ENCODE measurements at regions of chr12 and their contacts with region 1.

Region 1: GRCh38 chr12:52980693-52981423 is 25.4 kb upstream of the EIF4B start:
- DNase-seq: peak; percentile 53 to 85 (median 79)
- ATAC-seq: peak; percentile 98
- H3K4me3 ChIP-seq: no peak overlapping the region
- H3K4me3 Mint-ChIP-seq: no peak overlapping the region
- H3K27ac ChIP-seq: no peak overlapping the region
- H3K27ac Mint-ChIP-seq: peak overlapping the region in 1 of 9 donors; percentile 17
- H3K4me1 ChIP-seq: no peaks in the 10 kb centered on the region
- H3K4me1 Mint-ChIP-seq: peaks cover 0 to 7% (median 0%) of the 10 kb centered on the region in 7 donors
- H3K27me3 ChIP-seq: no peaks in the 10 kb centered on the region
- H3K27me3 Mint-ChIP-seq: peaks cover 23 to 44% (median 26%) of the 10 kb centered on the region in 5 donors

Region 2: GRCh38 chr12:52327052-52327829 is 653.6 kb before region 1 on chr12:
- CTCF ChIA-PET with region 1: no interaction called
- POLR2A ChIA-PET with region 1: no interaction called
- intact Hi-C with region 1: loop called in 1 of 2 experiments (anchors 1 kb)
- DNase-seq: peak; percentile 42 to 81 (median 72)
- ATAC-seq: peak; percentile 97
- H3K4me3 ChIP-seq: no peak overlapping the region
- H3K4me3 Mint-ChIP-seq: no peak overlapping the region
- H3K27ac ChIP-seq: no peak overlapping the region
- H3K27ac Mint-ChIP-seq: peak overlapping the region in 1 of 9 donors; percentile 1
- H3K4me1 ChIP-seq: peaks cover 0 to 6% of the 10 kb centered on the region in 2 donors
- H3K4me1 Mint-ChIP-seq: peaks cover 0 to 13% (median 6%) of the 10 kb centered on the region in 7 donors
- H3K27me3 ChIP-seq: no peaks in the 10 kb centered on the region
- H3K27me3 Mint-ChIP-seq: peaks cover 1 to 32% (median 19%) of the 10 kb centered on the region in 5 donors

Region 3: GRCh38 chr12:52847335-52848102 is 133.3 kb before region 1 on chr12:
- CTCF ChIA-PET with region 1: no interaction called
- POLR2A ChIA-PET with region 1: no interaction called
- intact Hi-C with region 1: no loop called
- DNase-seq: no peak
- ATAC-seq: no peak
- H3K4me3 ChIP-seq: no peak overlapping the region
- H3K4me3 Mint-ChIP-seq: no peak overlapping the region
- H3K27ac ChIP-seq: no peak overlapping the region
- H3K27ac Mint-ChIP-seq: no peak overlapping the region
- H3K4me1 ChIP-seq: no peaks in the 10 kb centered on the region
- H3K4me1 Mint-ChIP-seq: peaks cover 0 to 2% (median 1%) of the 10 kb centered on the region in 7 donors
- H3K27me3 ChIP-seq: no peaks in the 10 kb centered on the region
- H3K27me3 Mint-ChIP-seq: peaks cover 0 to 10% (median 0%) of the 10 kb centered on the region in 5 donors

Region 4: GRCh38 chr12:52879394-52880351 is 101.2 kb before region 1 on chr12:
- CTCF ChIA-PET with region 1: interaction called, 297 read pairs
- POLR2A ChIA-PET with region 1: interaction called, 18 read pairs
- intact Hi-C with region 1: loop called in 1 of 2 experiments (anchors 1 kb)
- DNase-seq: peak; percentile 67 to 84 (median 79)
- ATAC-seq: peak; percentile 99
- H3K4me3 ChIP-seq: peak overlapping the region; percentile 48
- H3K4me3 Mint-ChIP-seq: peak overlapping the region; percentile 51 to 85 (median 76)
- H3K27ac ChIP-seq: no peak overlapping the region
- H3K27ac Mint-ChIP-seq: peak overlapping the region in 6 of 9 donors; percentile 5 to 54 (median 32)
- H3K4me1 ChIP-seq: peaks cover 5 to 6% of the 10 kb centered on the region in 2 donors
- H3K4me1 Mint-ChIP-seq: peaks cover 3 to 13% (median 11%) of the 10 kb centered on the region in 7 donors
- H3K27me3 ChIP-seq: peaks cover 0 to 3% of the 10 kb centered on the region in 2 donors
- H3K27me3 Mint-ChIP-seq: peaks cover 0 to 21% (median 8%) of the 10 kb centered on the region in 5 donors

Region 5: GRCh38 chr12:52895061-52895887 is 85.6 kb before region 1 on chr12:
- CTCF ChIA-PET with region 1: interaction called, 28 read pairs
- POLR2A ChIA-PET with region 1: no interaction called
- intact Hi-C with region 1: no loop called
- DNase-seq: no peak
- ATAC-seq: no peak
- H3K4me3 ChIP-seq: no peak overlapping the region
- H3K4me3 Mint-ChIP-seq: no peak overlapping the region
- H3K27ac ChIP-seq: no peak overlapping the region
- H3K27ac Mint-ChIP-seq: peak overlapping the region in 1 of 9 donors; percentile 8
- H3K4me1 ChIP-seq: no peaks in the 10 kb centered on the region
- H3K4me1 Mint-ChIP-seq: no peaks in the 10 kb centered on the region
- H3K27me3 ChIP-seq: no peaks in the 10 kb centered on the region
- H3K27me3 Mint-ChIP-seq: peaks cover 0 to 10% (median 0%) of the 10 kb centered on the region in 5 donors

Region 6: GRCh38 chr12:52956987-52957386 is 23.9 kb before region 1 on chr12:
- CTCF ChIA-PET with region 1: interaction called, 11 read pairs
- POLR2A ChIA-PET with region 1: no interaction called
- intact Hi-C with region 1: loop called in 1 of 2 experiments (anchors 2 kb)
- DNase-seq: peak in 3 of 9 donors; percentile 18 to 28 (median 23)
- ATAC-seq: peak; percentile 38
- H3K4me3 ChIP-seq: no peak overlapping the region
- H3K4me3 Mint-ChIP-seq: no peak overlapping the region
- H3K27ac ChIP-seq: no peak overlapping the region
- H3K27ac Mint-ChIP-seq: peak overlapping the region in 6 of 9 donors; percentile 28 to 79 (median 40)
- H3K4me1 ChIP-seq: peaks cover 0 to 6% of the 10 kb centered on the region in 2 donors
- H3K4me1 Mint-ChIP-seq: peaks cover 0 to 7% (median 5%) of the 10 kb centered on the region in 7 donors
- H3K27me3 ChIP-seq: no peaks in the 10 kb centered on the region
- H3K27me3 Mint-ChIP-seq: peaks cover 0 to 3% (median 0%) of the 10 kb centered on the region in 5 donors

Region 7: DNA sequence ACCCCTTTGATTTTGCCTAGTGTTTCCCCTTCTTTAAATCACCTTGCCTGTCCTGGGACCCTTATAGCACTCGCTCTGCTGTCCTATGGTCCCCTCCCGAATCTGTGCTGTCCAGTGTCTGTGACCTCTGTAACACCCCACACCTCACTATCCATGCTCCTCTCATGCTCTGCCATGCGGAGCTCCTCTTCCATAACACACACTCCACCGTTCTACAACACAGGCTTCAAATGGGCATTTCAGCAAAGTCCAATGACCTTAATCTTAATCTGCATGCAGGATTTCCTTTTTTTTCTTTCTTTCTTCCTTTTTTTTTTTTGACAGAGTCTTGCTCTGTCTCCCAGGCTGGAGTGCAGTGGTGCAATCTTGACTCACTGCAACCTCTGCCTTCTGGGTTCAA is 148.3 kb after region 1 on chr12:
- CTCF ChIA-PET with region 1: no interaction called
- POLR2A ChIA-PET with region 1: no interaction called
- intact Hi-C with region 1: no loop called
- DNase-seq: no peak
- ATAC-seq: peak; percentile 36
- H3K4me3 ChIP-seq: no peak overlapping the region
- H3K4me3 Mint-ChIP-seq: no peak overlapping the region
- H3K27ac ChIP-seq: no peak overlapping the region
- H3K27ac Mint-ChIP-seq: no peak overlapping the region
- H3K4me1 ChIP-seq: no peaks in the 10 kb centered on the region
- H3K4me1 Mint-ChIP-seq: peaks cover 0 to 8% (median 0%) of the 10 kb centered on the region in 7 donors
- H3K27me3 ChIP-seq: no peaks in the 10 kb centered on the region
- H3K27me3 Mint-ChIP-seq: peaks cover 0 to 21% (median 8%) of the 10 kb centered on the region in 5 donors

Measured in naive thymus-derived CD4-positive, alpha-beta T cell (primary cell).